AG04449 (cell line): ENCODE measurements at regions of chr16 and their contacts with region 1.

Region 1: DNA sequence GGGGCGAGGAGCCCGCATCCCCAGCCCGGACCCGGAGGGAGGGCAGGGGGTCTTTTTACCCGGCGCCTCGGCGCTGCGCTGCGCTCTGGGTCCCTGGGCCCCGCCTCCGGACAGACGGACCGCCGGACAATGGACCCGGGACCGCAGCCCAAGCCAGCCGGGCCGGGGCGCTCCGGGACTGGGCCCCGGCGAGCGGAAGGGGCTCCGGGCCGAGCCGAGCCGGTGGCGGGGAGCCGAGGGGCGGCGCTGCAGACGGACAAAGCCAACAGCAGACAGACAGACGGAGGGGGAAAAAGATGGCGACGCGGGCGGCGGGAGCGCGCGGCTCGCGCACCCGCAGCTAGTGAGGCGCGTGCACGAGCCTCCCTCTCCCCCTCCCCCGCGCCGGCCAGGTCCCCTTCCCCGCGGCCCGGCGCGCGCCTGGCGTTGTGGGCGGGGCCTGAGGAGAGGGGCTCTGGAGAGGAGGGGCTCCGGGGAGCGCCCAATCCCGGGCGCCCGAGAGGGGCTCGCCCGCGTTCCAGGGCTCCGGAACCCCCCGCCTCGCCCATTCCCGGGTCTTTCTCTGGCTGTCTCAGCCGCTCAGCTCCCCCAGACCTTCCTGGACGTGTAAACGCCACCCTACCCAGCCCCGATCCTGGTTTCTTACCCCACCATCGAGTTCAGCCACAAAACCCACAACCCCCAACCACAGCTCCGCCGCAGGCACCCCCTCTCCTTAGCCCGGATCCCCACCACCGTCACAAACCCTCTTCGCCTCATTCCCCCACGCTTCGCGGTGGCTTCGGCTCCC is at the start of gene ZNF821:
- DNase-seq: no peak
- H3K4me3 ChIP-seq: peak within 1 kb of the TSS; percentile 76
- CTCF ChIP-seq: no peak

Region 2: GRCh38 chr16:71504901-71505300 is 379.1 kb before region 1 on chr16:
- CTCF ChIA-PET with region 1: no interaction called
- POLR2A ChIA-PET with region 1: no interaction called
- DNase-seq: no peak
- H3K4me3 ChIP-seq: no peak overlapping the region
- CTCF ChIP-seq: no peak

Region 3: DNA sequence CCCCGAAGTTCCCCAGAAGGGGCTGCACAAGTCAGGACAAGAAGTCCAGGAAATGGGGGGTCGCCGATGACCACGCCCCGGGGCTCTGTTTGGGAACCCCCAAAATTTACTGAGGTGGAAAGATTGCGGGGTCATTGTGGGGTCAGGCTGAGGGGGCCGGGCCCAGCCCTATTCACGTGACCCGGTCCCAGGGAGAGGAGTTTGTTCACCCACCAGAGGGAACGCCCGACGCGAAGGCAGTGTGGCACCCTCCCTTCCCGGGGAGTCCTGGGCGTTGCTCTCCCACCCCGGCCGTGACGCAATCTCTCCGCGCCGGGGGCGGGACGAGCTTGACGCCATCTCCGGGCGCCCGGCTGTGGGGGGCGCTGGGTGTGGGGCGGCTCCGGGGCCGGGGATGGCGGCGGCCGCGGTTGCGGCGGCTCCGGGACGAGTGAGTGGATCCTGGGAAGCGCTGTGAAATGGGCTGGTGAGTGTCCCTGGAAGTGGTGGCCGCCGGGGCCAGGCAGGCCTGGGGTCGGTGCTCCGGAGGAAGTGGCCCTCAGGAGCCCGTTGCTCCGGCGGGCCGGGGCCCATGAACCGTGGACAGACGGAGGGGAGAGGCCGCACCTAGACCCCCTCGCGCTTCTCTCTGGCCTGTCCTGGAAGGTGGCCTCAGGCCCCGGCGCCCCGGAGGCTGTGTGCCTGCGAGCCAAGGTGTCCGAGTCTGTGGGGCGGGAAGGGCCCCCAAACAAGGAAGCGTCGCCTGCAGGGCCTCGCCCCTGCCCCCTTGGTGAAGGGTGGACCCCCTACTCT is 38.2 kb before region 1 on chr16 and contains the start of gene ATXN1L:
- CTCF ChIA-PET with region 1: interaction called, 16 read pairs
- POLR2A ChIA-PET with region 1: no interaction called
- DNase-seq: peak; percentile 54
- H3K4me3 ChIP-seq: peak within 1 kb of the TSS; percentile 94
- CTCF ChIP-seq: no peak

Region 4: DNA sequence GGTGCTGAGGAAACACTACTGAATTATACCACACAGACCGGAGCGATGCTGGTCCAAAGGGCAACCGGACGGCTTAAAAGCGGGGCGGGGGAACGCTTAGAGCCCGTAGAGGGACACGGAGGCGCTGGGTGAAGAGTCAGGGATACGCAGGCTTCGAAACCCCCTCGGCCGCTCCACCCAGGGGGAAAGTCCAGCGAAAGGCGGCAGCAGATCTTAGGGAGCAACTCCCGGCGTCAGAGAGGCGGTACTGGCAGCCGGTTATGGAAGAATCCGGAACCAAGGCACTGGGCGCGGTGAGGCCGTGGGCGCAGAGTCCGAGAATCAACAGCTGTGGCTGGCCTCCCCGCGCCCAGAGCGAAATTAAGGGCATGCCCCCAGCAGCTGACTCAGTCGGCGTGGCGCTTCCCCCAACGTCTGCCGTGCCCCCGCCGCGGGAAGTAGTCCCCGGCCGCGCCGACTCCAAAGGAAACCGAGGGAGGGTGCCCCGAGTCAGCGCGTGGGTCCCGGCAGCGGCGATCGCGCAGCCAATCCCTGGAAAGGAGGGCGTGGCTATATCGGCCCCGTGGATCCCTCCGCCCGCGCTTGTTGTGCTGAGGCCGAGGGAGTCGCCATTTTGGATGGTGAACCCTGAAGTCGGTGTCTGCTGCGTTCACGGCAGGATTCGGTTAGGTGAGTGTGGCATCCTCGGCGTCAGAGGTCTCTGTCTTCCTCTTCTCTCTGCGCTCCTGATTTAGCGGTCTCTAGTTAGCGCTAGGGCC is 11.1 kb after region 1 on chr16 and contains the start of gene IST1:
- CTCF ChIA-PET with region 1: interaction called, 122 read pairs
- POLR2A ChIA-PET with region 1: interaction called, 11 read pairs
- DNase-seq: peak; percentile 92
- H3K4me3 ChIP-seq: peak within 1 kb of the TSS; percentile 90
- CTCF ChIP-seq: no peak

Region 5: DNA sequence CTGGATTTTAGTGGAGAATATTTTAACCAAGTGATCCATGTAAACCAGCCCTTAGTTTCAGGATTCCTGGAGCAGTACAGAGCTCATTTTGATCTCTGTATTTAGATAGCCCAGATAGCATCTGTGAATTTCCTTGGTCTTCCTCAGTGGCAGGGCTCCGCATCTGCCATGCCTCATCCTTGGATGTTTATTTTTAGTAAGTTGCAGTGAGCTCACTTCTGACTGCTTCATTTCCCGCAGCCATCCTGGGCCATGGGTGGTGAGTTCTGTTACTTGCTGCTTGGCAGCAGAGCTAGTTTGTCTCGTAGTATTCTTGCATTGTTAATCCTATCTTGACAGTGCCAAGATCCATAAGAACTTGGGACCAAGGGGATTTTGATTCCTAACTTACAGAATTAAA is 45.0 kb after region 1 on chr16:
- CTCF ChIA-PET with region 1: interaction called, 10 read pairs
- POLR2A ChIA-PET with region 1: no interaction called
- DNase-seq: peak; percentile 57
- H3K4me3 ChIP-seq: no peak overlapping the region
- CTCF ChIP-seq: no peak